Posterior cingulate gyrus (tissue), 11 donors: ENCODE measurements at regions of chr15 and their contacts with region 1.

Region 1: DNA sequence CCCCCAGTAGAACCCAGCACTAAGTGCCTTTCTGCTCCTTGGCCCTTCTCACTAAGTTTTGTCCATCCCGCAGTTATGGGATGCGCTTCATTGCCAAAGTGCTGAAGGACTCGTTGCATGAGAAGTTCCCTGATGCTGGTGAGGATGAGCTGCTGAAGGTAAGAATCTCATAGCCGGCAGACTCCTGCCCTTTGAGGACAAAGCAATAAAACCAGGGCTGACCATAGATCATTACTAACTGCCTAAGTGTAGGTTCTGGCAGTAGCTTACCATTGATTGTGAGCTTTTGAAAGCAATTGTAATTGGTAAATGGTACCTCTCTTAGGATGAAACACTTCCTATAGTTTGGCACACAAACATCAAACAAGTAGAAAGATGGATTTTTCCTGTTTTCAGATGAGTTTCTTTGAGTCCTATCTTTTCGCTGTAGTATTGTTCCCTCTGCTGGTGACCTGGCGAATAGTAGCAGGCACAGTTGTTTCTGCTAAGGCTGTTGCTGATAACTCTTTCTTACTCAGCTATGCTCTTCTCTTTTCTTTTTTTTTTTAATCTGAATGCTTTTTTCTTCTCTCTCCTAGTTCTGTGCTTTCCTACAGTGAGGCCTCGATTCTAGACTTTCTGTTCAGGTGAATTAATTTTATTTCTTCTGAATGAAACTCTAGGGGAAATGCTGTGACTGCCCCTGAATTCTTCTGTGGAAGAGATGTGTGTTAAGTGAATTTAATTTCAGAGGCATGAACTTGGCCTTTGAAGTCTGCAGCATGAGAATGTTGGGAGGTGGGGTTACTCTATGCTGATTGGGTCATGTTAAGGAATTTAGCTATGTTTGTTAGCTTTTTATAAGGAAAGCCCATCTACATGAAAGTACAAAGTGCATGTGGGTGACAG is 47.4 kb upstream of the CRTC3 start:
- DNase-seq: peak; percentile 34 to 93 (median 66)

Region 2: GRCh38 chr15:90320061-90320884 is 162.1 kb before region 1 on chr15:
- intact Hi-C with region 1: loop called (anchors 1 kb)
- DNase-seq: peak; percentile 57 to 97 (median 76)

Region 3: GRCh38 chr15:90362936-90363212 is 119.5 kb before region 1 on chr15:
- intact Hi-C with region 1: loop called (anchors 1 kb)
- DNase-seq: peak in 1 of 10 donors; percentile 8

Region 4: GRCh38 chr15:90412356-90413194 is 69.8 kb before region 1 on chr15:
- intact Hi-C with region 1: no loop called
- DNase-seq: no peak

Region 5: GRCh38 chr15:90598031-90598577 is 115.7 kb after region 1 on chr15:
- intact Hi-C with region 1: loop called (anchors 10 kb)
- DNase-seq: peak in 6 of 10 donors; percentile 31 to 84 (median 47)